ENCODE measurements at regions of chr5 and their contacts with region 1.

Region 1: DNA sequence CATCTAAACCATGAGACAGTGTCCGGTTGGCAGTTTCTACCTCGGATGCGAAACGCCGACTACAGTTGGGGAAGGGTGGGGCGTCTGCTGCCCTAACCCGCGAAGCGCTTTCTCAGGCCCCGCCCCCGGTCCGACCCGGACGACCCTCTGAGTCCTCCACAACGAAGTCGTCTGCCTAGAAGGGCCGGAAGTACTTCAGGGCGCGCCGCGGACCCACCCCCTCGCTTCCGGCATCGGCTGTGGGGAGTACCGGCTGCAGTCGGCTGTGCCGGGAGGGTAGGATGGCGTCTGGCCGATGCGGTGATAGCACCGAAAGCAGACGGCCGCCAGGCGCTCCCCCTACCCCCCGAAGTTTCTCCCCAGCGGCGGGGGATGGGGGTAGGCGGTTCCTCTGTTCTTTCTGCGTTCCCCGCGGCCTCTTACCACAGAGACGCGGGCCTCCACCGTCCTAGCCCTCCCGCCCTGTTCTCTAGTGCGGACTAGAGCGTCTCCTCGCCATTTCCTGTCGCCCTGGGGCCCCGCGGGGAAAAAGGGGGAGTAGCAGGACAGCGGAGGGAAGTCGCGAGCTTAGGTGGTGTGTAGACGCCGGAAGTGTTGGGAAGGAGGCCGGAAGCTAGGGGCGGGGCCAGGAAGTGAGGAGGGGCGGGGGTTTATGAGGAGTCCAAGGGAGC is at the start of gene TRIM41:
- DNase-seq: peak; percentile 99
- H3K4me3 ChIP-seq: peak within 1 kb of the TSS; percentile 93
- H3K4me3 Mint-ChIP-seq: peak within 1 kb of the TSS; percentile 86
- H3K27ac Mint-ChIP-seq: peak within 1 kb of the TSS; percentile 99
- H3K4me1 ChIP-seq: no peaks in the 10 kb centered on the region
- H3K4me1 Mint-ChIP-seq: peaks cover 35% of the 10 kb centered on the region
- H3K27me3 ChIP-seq: no peaks in the 10 kb centered on the region
- H3K27me3 Mint-ChIP-seq: peaks cover 6% of the 10 kb centered on the region
- CTCF ChIP-seq: peak in 1 of 2 experiments; percentile 5
- total RNA-seq, gene TRIM41: 23.6 and 28.7 TPM in 2 replicates

Region 2: DNA sequence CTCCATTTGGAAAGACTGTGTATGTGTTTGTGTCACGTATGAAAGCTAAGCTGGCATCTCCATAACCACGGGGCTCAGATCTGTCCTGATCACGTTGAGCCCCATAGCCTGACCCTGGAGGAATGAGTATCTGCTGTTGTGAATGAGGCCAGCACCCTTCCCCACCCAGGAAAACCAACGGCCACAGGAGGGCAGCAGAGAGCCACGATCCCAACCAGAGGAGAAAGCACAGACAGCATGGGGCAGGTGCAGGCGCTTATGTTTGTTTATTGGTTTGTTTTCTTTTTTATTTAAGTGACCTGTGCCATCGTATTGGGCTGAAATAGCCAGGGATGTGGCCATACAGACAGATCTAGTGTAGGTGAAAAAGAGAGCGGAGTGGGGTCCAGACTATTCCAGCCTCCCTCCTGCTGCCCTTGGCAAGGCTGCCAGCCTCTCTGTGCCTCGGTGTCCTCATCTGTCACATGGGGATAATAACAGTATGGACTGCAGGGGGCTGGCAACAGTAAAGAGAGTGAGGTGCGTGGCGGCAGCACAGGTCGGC is 63.8 kb before region 1 on chr5:
- CTCF ChIA-PET with region 1: no interaction called
- POLR2A ChIA-PET with region 1: no interaction called
- intact Hi-C with region 1: no loop called
- DNase-seq: peak; percentile 89 to 93
- H3K4me3 ChIP-seq: no peak overlapping the region
- H3K4me3 Mint-ChIP-seq: peak overlapping the region; percentile 22
- H3K27ac Mint-ChIP-seq: peak overlapping the region; percentile 70
- H3K4me1 ChIP-seq: peaks cover 11% of the 10 kb centered on the region
- H3K4me1 Mint-ChIP-seq: peaks cover 7% of the 10 kb centered on the region
- H3K27me3 ChIP-seq: no peaks in the 10 kb centered on the region
- H3K27me3 Mint-ChIP-seq: peaks cover 3% of the 10 kb centered on the region
- CTCF ChIP-seq: peak; percentile 92 to 93

Region 3: GRCh38 chr5:181191529-181192394 is 31.4 kb before region 1 on chr5:
- CTCF ChIA-PET with region 1: interaction called, 8 read pairs
- POLR2A ChIA-PET with region 1: interaction called, 4 read pairs
- intact Hi-C with region 1: loop called (anchors 1 kb)
- DNase-seq: peak; percentile 94 to 96
- H3K4me3 ChIP-seq: peak overlapping the region; percentile 94
- H3K4me3 Mint-ChIP-seq: peak overlapping the region; percentile 91
- H3K27ac Mint-ChIP-seq: peak overlapping the region; percentile 97
- H3K4me1 ChIP-seq: peaks cover 8% of the 10 kb centered on the region
- H3K4me1 Mint-ChIP-seq: peaks cover 26% of the 10 kb centered on the region
- H3K27me3 ChIP-seq: no peaks in the 10 kb centered on the region
- H3K27me3 Mint-ChIP-seq: peaks cover 10% of the 10 kb centered on the region
- CTCF ChIP-seq: no peak

Region 4: GRCh38 chr5:181207214-181208107 is 15.7 kb before region 1 on chr5:
- CTCF ChIA-PET with region 1: interaction called, 3 read pairs
- POLR2A ChIA-PET with region 1: interaction called, 15 read pairs
- intact Hi-C with region 1: loop called (anchors 1 kb)
- DNase-seq: peak; percentile 87 to 88
- H3K4me3 ChIP-seq: peak overlapping the region; percentile 50
- H3K4me3 Mint-ChIP-seq: peak overlapping the region; percentile 82
- H3K27ac Mint-ChIP-seq: peak overlapping the region; percentile 91
- H3K4me1 ChIP-seq: no peaks in the 10 kb centered on the region
- H3K4me1 Mint-ChIP-seq: peaks cover 28% of the 10 kb centered on the region
- H3K27me3 ChIP-seq: no peaks in the 10 kb centered on the region
- H3K27me3 Mint-ChIP-seq: peaks cover 15% of the 10 kb centered on the region
- CTCF ChIP-seq: no peak

Region 5: DNA sequence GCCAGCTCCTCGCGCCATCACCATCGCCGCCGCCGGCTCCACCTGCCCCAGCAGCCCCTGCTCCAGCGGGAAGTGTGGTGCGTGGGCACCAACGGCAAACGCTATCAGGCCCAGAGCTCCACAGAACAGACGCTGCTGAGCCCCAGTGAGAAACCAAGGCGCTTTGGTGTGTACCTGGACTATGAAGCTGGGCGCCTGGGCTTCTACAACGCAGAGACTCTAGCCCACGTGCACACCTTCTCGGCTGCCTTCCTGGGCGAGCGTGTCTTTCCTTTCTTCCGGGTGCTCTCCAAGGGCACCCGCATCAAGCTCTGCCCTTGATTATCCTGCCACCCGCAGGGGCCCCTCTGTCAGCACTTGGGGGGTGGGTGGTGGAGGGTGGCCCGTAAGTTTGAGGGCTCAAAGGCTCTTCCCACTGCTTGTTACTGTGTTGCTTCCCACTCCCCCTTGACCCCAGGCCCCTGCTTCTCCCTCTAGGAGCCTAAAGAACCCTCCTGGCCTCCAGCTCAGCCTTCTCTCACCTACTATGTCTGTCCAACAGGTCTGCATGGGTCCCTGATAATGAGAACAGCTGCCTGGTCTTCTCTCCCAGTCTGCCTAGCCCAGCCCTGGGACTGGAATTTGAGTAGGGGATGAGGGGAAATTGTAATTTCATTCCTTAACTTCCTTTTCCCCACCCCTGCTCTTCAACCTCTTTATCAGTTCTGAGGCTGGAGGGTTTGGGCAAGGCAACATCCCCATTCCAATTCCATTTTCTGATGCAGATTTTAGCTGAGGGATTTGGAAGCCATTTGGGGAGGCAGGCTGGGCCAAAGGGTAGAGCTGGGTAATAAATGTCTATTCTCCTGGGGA is 11.5 kb after region 1 on chr5:
- CTCF ChIA-PET with region 1: no interaction called
- POLR2A ChIA-PET with region 1: interaction called, 7 read pairs
- intact Hi-C with region 1: loop called (anchors 1 kb)
- DNase-seq: no peak
- H3K4me3 ChIP-seq: no peak overlapping the region
- H3K4me3 Mint-ChIP-seq: peak overlapping the region; percentile 15
- H3K27ac Mint-ChIP-seq: peak overlapping the region; percentile 79
- H3K4me1 ChIP-seq: no peaks in the 10 kb centered on the region
- H3K4me1 Mint-ChIP-seq: no peaks in the 10 kb centered on the region
- H3K27me3 ChIP-seq: no peaks in the 10 kb centered on the region
- H3K27me3 Mint-ChIP-seq: no peaks in the 10 kb centered on the region
- CTCF ChIP-seq: no peak

Region 6: GRCh38 chr5:181243512-181244343 is 20.5 kb after region 1 on chr5 and contains the start of gene RACK1:
- CTCF ChIA-PET with region 1: no interaction called
- POLR2A ChIA-PET with region 1: interaction called, 9 read pairs
- intact Hi-C with region 1: loop called (anchors 1 kb)
- DNase-seq: peak; percentile 91 to 92
- H3K4me3 ChIP-seq: peak within 1 kb of the TSS; percentile 87
- H3K4me3 Mint-ChIP-seq: peak within 1 kb of the TSS; percentile 97
- H3K27ac Mint-ChIP-seq: peak within 1 kb of the TSS; percentile 100
- H3K4me1 ChIP-seq: peaks cover 26% of the 10 kb centered on the region
- H3K4me1 Mint-ChIP-seq: peaks cover 19% of the 10 kb centered on the region
- H3K27me3 ChIP-seq: no peaks in the 10 kb centered on the region
- H3K27me3 Mint-ChIP-seq: no peaks in the 10 kb centered on the region
- CTCF ChIP-seq: no peak
- total RNA-seq, gene RACK1: 2,098 and 2,258 TPM in 2 replicates

Region 7: DNA sequence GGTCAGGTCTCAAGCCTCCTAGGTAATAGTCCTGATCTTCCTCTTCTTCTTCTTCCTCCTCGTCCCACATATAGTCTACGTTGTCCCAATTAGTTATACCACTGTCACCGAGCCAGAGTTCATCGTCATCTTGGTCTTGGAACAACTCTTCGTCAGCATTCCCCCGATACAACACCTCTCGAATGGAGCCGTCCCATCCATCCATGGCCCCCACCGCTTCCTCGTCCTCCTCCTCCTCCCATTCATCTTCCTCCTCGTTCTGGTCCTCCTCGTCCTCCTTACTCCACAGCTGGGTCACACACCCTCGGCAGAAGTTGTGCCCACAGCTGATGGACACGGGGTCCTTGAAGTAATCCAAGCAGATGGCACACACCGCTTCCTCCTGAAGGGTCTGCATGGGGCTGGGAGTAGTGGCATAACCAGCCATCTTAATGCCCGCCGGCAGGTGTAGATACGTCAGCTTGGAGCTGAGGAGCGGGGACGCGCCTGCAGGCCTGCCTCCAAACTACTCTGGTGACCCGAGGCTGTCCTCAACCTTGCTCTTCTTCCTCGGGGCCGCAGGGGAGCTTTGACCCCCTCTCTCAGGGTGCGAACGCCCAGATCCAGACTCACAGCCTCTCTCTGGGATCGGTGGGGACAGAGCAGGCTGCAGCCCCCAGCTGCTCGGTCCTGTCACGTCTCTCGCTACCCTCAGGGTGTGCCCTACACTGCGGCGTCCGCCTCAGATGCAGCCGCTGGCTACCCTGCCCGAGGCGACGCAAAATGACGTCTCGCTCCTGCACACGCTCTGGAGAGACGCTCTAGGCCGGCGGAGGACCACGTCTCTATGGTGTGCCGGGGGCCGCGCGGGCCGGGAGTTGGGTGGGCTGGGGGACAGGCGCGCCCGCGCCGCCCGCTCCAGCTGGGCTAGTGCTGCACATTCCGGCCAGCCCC is 37.5 kb after region 1 on chr5 and contains the start of gene TRIM52:
- CTCF ChIA-PET with region 1: interaction called, 7 read pairs
- POLR2A ChIA-PET with region 1: no interaction called
- intact Hi-C with region 1: loop called (anchors 1 kb)
- DNase-seq: peak; percentile 91 to 95
- H3K4me3 ChIP-seq: peak within 1 kb of the TSS; percentile 60
- H3K4me3 Mint-ChIP-seq: peak within 1 kb of the TSS; percentile 80
- H3K27ac Mint-ChIP-seq: peak within 1 kb of the TSS; percentile 69
- H3K4me1 ChIP-seq: peaks cover 11% of the 10 kb centered on the region; the same call in 1 of the 2 replicates
- H3K4me1 Mint-ChIP-seq: peaks cover 15% of the 10 kb centered on the region
- H3K27me3 ChIP-seq: no peaks in the 10 kb centered on the region
- H3K27me3 Mint-ChIP-seq: no peaks in the 10 kb centered on the region
- CTCF ChIP-seq: no peak
- total RNA-seq, gene TRIM52: 11.9 and 13.6 TPM in 2 replicates